ENCODE measurements at regions of chr1 and their contacts with region 1.

Region 1: GRCh38 chr1:167715157-167715999 is 6.4 kb upstream of the MPZL1 start:
- DNase-seq: peak; percentile 90
- H3K4me3 ChIP-seq: peak overlapping the region; percentile 79
- CTCF ChIP-seq: peak; percentile 81

Region 2: GRCh38 chr1:167273027-167273800 is 442.2 kb before region 1 on chr1:
- in situ Hi-C with region 1: no loop called
- DNase-seq: peak; percentile 80
- H3K4me3 ChIP-seq: no peak overlapping the region
- CTCF ChIP-seq: no peak

Region 3: DNA sequence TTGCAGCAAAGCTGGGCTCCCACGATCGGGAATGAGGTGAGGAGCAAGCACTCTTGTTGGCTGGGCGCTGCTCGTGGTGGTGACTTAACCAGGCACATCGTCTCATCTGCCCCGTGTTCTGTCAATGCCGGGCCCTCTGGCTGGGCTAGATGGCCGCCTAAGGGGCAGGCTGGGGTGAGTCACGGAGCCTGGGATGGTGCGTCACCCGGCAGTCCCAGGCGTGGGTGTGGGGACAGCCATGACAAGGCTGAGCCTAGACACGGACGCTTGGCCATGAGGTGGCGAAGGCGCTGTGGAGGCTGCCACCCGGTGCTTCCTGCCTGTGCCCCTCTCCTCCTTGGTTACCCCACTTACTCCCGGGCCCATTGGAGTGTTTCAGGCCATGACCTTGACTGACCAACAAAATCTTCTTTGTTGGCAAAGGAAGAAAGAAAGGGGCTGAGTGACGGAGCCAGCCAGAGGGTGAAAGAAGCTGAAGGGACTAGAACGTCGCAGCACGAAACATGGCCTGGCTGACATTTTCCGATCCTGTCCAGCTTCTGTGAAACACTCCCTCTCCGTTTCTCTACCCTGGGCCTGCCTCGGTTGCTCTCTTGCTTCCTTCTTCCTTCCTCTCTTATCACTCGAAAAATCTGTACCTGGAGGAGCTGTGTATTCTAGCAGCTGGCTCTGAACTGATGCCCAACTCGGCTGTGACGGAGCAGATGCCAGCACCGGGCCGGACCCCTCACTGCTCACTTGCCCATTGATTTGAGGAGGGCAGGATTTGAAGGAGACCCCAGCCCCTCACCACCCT is 197.6 kb before region 1 on chr1:
- in situ Hi-C with region 1: no loop called
- DNase-seq: no peak
- H3K4me3 ChIP-seq: no peak overlapping the region
- CTCF ChIP-seq: no peak

Region 4: GRCh38 chr1:167533851-167534300 is 181.5 kb before region 1 on chr1:
- in situ Hi-C with region 1: no loop called
- DNase-seq: peak; percentile 53
- H3K4me3 ChIP-seq: no peak overlapping the region
- CTCF ChIP-seq: peak; percentile 90

Region 5: DNA sequence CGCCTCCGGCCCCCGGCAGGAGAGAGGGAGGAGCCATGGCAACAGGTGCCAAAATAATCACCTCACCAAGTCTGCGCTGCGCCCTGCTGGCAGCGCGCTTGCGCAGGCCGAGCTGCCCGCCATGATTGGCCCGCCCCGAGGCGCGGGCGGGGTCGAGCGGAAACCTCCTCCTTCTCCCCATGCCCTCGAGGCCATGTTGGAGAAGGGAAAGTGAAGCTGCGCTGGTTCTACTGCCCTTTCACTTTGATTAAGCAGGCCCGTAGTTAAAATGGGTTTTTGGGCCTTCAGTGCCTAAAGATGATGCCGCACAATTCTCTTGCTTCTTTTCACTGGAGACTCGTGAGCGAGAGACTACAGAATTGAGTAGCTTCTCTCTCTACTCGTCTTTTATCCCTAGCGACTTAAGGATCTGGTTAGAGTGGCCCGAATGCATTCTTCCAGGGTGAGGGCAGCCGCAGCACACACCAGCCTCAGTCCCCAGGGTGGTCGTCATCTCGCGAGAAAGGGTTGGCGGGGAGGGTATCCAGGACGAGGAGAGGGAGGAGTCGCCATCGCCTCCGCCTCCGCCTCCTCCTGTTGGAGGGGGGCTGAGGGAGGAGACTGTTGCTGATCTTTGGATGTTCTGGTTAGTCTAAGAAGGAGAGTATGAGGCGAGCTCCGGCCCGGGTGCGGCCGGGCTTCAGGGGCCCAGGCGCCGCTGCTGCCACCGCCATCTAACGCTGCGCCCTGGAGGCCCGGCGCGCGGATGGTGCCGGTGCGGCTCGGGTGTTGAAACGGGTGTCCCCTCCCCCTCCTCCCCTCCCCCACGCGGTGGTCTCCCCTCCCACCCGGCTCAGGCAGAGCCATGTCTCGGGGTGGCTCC is 220.9 kb after region 1 on chr1 and contains the start of gene DCAF6:
- in situ Hi-C with region 1: loop called (anchors 25 kb)
- DNase-seq: peak; percentile 99
- H3K4me3 ChIP-seq: peak within 1 kb of the TSS; percentile 94
- CTCF ChIP-seq: no peak

Region 6: GRCh38 chr1:168004531-168004930 is 289.2 kb after region 1 on chr1:
- in situ Hi-C with region 1: no loop called
- DNase-seq: no peak
- H3K4me3 ChIP-seq: no peak overlapping the region
- CTCF ChIP-seq: no peak

Measured in astrocyte of the spinal cord (primary cell).